ENCODE measurements at regions of chr18 and their contacts with region 1.

Region 1: GRCh38 chr18:54357660-54358494 is at the starts of genes C18orf54 and STARD6:
- DNase-seq: peak; percentile 95
- ATAC-seq: peak; percentile 92
- H3K4me3 ChIP-seq: peak within 1 kb of the TSS; percentile 75 to 99 (median 82)
- H3K4me3 Mint-ChIP-seq: peak within 1 kb of the TSS; percentile 92
- H3K27ac ChIP-seq: peak within 1 kb of the TSS; percentile 53 to 80
- H3K27ac Mint-ChIP-seq: peak within 1 kb of the TSS; percentile 82
- H3K4me1 ChIP-seq: peaks cover 8 to 9% of the 10 kb centered on the region in 2 donors
- H3K4me1 Mint-ChIP-seq: peaks cover 17% of the 10 kb centered on the region
- H3K27me3 ChIP-seq: no peaks in the 10 kb centered on the region
- H3K27me3 Mint-ChIP-seq: no peaks in the 10 kb centered on the region
- CTCF ChIP-seq: peak; percentile 66
- total RNA-seq, gene C18orf54: 4.7 and 4.8 TPM in 2 replicates
- total RNA-seq, gene STARD6: not detected in 2 replicates

Region 2: DNA sequence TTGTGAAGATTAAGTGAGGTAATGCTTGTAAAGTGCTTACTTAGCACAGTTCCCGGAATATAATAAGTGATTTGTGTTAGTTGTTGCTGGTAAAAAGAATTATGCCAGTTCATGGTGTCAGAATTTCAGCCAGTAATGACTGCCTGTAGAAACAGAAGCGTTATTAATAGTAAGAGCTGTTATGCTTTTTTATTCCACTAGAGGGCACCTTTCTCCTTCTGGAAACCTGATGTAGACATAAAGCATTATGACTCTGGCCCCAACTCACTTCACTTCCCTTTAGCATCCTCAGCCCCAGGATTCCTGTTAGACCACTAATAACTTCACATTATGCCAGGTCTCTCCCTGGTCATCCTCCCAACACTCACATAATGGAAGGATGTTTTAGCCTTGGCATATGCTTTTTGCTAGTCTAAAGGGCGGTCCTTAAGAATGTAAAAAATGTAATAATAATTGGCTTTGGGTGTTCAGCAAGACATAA is 34.7 kb after region 1 on chr18:
- CTCF ChIA-PET with region 1: interaction called, 5 read pairs
- POLR2A ChIA-PET with region 1: interaction called, 9 read pairs
- intact Hi-C with region 1: loop called (anchors 2 kb)
- DNase-seq: peak; percentile 74
- ATAC-seq: peak; percentile 64
- H3K4me3 ChIP-seq: no peak overlapping the region
- H3K4me3 Mint-ChIP-seq: no peak overlapping the region
- H3K27ac ChIP-seq: no peak overlapping the region
- H3K27ac Mint-ChIP-seq: no peak overlapping the region
- H3K4me1 ChIP-seq: no peaks in the 10 kb centered on the region
- H3K4me1 Mint-ChIP-seq: no peaks in the 10 kb centered on the region
- H3K27me3 ChIP-seq: no peaks in the 10 kb centered on the region
- H3K27me3 Mint-ChIP-seq: peaks cover 9% of the 10 kb centered on the region
- CTCF ChIP-seq: peak; percentile 80